Lower leg skin (tissue), 4 donors: ENCODE measurements at regions of chr7 and their contacts with region 1.

Region 1: GRCh38 chr7:132590162-132590561 is 13.9 kb upstream of the PLXNA4 start:
- DNase-seq: no peak
- H3K4me3 ChIP-seq: no peak overlapping the region
- CTCF ChIP-seq: no peak
- POLR2A ChIP-seq: no peak

Region 2: GRCh38 chr7:132643302-132643701 is 53.1 kb after region 1 on chr7:
- intact Hi-C with region 1: loop called (anchors 1 kb)
- DNase-seq: no peak
- H3K4me3 ChIP-seq: no peak overlapping the region
- CTCF ChIP-seq: no peak
- POLR2A ChIP-seq: no peak